Activated CD8-positive, alpha-beta T cell treated with anti-CD3 and anti-CD28 coated beads, Interleukin-2, amount 10 ng/mL, durations not matched to agents 7 days and 5 days (primary cell): ENCODE measurements at regions of chr16 and their contacts with region 1.

Region 1: GRCh38 chr16:4506450-4506849 is 30.3 kb downstream of the HMOX2 start:
- DNase-seq: peak; percentile 74
- ATAC-seq: peak; percentile 60
- H3K4me3 Mint-ChIP-seq: peak overlapping the region; percentile 73
- H3K27ac Mint-ChIP-seq: peak overlapping the region; percentile 95
- H3K4me1 Mint-ChIP-seq: peaks cover 63% of the 10 kb centered on the region
- H3K27me3 Mint-ChIP-seq: no peaks in the 10 kb centered on the region

Region 2: DNA sequence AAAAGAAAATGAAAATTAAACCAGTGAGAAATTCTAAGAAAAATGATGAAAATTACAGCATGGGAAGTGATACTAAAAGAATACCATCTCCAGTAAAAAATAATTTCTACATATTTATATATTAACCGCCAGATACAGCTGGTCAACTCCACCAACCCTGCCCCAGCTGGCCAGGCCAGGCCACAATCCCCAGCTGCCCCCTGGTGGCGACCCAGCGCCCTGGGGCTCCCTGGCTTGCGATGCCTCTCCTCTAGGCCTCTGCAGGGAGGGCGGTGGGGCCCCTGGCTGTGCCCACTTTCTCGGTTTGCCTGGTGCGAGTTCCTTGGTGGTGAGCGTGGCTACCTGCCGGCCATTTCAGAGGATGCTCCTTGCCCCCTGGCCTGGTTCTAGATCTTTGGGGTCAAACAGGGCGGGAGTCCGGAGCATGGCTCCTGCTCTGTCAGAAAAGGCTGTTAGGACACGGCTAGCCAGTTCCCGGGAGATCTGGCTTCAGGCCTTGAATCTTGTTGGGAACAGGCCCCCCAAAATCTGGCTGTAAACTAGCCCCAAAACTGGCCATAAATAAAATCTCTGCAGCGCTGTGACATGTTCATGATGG is 176.1 kb before region 1 on chr16:
- CTCF ChIA-PET with region 1: no interaction called
- POLR2A ChIA-PET with region 1: no interaction called
- DNase-seq: peak; percentile 79
- ATAC-seq: peak; percentile 74
- H3K4me3 Mint-ChIP-seq: no peak overlapping the region
- H3K27ac Mint-ChIP-seq: no peak overlapping the region
- H3K4me1 Mint-ChIP-seq: peaks cover 9% of the 10 kb centered on the region
- H3K27me3 Mint-ChIP-seq: no peaks in the 10 kb centered on the region

Region 3: GRCh38 chr16:4465977-4466779 is 40.3 kb before region 1 on chr16:
- CTCF ChIA-PET with region 1: interaction called, 10 read pairs
- POLR2A ChIA-PET with region 1: interaction called, 5 read pairs
- DNase-seq: peak; percentile 78
- ATAC-seq: peak; percentile 94
- H3K4me3 Mint-ChIP-seq: peak overlapping the region; percentile 1
- H3K27ac Mint-ChIP-seq: peak overlapping the region; percentile 76
- H3K4me1 Mint-ChIP-seq: peaks cover 23% of the 10 kb centered on the region
- H3K27me3 Mint-ChIP-seq: no peaks in the 10 kb centered on the region

Region 4: DNA sequence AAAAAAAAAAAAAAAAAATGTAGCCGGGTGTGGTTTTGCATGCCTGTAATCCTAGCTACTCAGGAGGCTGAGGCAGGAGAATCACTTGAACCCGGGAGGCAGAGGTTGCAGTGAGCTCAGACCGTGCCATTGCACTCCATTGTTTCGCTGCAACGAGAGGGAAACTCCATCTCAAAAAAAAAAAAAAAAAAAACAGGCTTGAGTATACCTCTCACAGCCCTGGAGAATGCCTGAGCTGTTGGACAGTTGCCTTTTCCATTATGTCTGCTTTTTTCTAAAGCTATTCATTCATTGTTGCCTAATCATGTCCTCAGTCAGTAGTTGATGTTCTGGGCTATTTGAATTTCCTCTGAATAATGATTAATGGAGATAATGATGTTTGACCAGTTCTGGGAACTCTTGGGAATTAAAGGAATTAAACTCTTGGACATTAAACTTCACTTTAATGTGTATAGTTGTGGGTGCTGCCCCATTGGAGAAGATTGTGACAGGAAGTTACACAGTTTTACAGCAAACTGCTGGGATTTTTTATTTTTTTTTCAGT is 18.4 kb before region 1 on chr16:
- CTCF ChIA-PET with region 1: interaction called, 173 read pairs
- POLR2A ChIA-PET with region 1: interaction called, 14 read pairs
- DNase-seq: peak; percentile 35
- ATAC-seq: peak; percentile 68
- H3K4me3 Mint-ChIP-seq: peak overlapping the region; percentile 64
- H3K27ac Mint-ChIP-seq: peak overlapping the region; percentile 92
- H3K4me1 Mint-ChIP-seq: peaks cover 62% of the 10 kb centered on the region
- H3K27me3 Mint-ChIP-seq: no peaks in the 10 kb centered on the region

Region 5: DNA sequence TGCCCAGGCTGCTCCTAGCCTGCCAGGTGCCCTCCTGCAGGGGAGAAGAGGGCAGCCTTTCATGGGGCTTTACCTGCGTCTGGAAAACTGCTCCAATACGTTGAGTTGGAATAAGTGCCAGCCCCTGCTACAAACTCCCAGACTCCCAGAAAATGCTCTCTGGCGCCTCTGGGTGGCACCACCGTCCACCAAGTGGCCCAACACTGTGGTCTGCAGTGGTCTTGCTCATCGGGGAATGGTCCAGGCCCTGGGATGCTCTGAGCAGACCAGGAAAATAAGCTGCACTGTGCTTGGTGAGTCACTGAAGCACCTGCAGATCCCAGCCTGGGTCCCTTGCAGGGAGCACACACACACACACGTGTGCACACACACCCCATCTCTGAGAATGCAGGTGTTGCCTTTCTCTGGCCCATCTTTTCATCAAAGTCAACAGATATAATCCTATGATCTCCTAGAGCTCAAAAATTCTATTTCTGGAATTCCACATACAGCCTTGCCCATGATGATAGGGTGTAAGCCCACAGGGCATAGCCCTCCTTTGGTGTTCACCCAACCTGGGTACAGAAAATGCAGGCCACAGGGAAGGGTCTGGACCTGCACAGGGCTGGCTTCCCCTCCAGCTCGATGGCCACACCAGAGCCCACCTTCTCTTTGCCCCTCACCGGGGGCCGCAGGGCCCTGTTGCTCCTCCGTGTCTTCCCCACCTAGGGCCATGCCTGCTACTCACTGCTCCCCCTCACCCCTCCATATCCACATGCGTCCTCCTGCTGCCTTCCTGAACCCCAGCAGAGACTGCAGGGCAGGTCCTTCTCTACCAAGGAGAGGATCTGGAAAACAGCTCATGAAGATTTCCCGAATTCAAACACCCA is 11.6 kb after region 1 on chr16:
- CTCF ChIA-PET with region 1: interaction called, 86 read pairs
- POLR2A ChIA-PET with region 1: interaction called, 13 read pairs
- DNase-seq: no peak
- ATAC-seq: no peak
- H3K4me3 Mint-ChIP-seq: no peak overlapping the region
- H3K27ac Mint-ChIP-seq: peak overlapping the region; percentile 59
- H3K4me1 Mint-ChIP-seq: peaks cover 54% of the 10 kb centered on the region
- H3K27me3 Mint-ChIP-seq: no peaks in the 10 kb centered on the region

Region 6: DNA sequence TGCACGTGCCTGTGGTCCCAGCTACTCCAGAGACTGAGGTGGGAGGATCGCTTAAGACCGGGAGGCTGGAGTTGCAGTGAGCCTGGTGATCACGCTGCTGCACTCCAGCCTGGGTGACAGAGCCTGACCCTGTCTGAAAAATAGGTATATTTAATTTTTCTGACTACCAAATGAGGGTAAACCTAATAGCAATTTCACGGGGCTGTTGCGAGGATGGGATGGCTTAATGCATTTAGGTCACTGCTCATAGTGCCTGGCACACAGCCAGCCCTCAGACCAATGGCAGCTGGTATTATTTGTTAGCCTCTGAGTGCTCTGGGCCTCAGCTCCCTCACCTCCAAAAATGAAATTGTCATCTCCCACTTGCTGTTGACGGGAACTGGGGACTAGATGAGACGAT is 38.0 kb after region 1 on chr16:
- CTCF ChIA-PET with region 1: interaction called, 159 read pairs
- POLR2A ChIA-PET with region 1: interaction called, 4 read pairs
- DNase-seq: no peak
- ATAC-seq: no peak
- H3K4me3 Mint-ChIP-seq: no peak overlapping the region
- H3K27ac Mint-ChIP-seq: no peak overlapping the region
- H3K4me1 Mint-ChIP-seq: peaks cover 17% of the 10 kb centered on the region
- H3K27me3 Mint-ChIP-seq: no peaks in the 10 kb centered on the region

Region 7: DNA sequence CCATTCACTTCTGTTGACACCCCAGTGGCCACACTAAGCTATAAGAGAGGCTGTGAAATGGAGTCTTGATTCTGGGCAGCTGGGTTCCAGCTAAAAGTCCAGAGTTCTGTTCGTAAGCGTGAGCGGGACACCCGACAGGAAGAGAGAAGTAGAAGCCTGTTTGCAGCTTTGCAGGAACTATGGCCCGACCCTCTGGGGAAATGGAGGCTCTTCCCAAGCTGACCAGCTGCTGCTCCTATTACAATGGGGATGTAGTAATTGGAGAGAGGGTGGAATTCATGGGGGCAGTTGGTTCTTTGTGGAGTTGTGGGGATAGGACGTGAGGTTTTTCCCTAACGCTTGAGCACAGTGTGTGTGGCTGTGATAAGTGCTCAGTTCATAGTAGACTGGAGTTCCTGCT is 79.8 kb after region 1 on chr16:
- CTCF ChIA-PET with region 1: interaction called, 40 read pairs
- POLR2A ChIA-PET with region 1: interaction called, 3 read pairs
- DNase-seq: no peak
- ATAC-seq: no peak
- H3K4me3 Mint-ChIP-seq: no peak overlapping the region
- H3K27ac Mint-ChIP-seq: no peak overlapping the region
- H3K4me1 Mint-ChIP-seq: peaks cover 4% of the 10 kb centered on the region
- H3K27me3 Mint-ChIP-seq: peaks cover 11% of the 10 kb centered on the region

Region 8: GRCh38 chr16:4597174-4597573 is 90.7 kb after region 1 on chr16:
- CTCF ChIA-PET with region 1: no interaction called
- POLR2A ChIA-PET with region 1: no interaction called
- DNase-seq: no peak
- ATAC-seq: no peak
- H3K4me3 Mint-ChIP-seq: no peak overlapping the region
- H3K27ac Mint-ChIP-seq: no peak overlapping the region
- H3K4me1 Mint-ChIP-seq: no peaks in the 10 kb centered on the region
- H3K27me3 Mint-ChIP-seq: peaks cover 3% of the 10 kb centered on the region

Region 9: DNA sequence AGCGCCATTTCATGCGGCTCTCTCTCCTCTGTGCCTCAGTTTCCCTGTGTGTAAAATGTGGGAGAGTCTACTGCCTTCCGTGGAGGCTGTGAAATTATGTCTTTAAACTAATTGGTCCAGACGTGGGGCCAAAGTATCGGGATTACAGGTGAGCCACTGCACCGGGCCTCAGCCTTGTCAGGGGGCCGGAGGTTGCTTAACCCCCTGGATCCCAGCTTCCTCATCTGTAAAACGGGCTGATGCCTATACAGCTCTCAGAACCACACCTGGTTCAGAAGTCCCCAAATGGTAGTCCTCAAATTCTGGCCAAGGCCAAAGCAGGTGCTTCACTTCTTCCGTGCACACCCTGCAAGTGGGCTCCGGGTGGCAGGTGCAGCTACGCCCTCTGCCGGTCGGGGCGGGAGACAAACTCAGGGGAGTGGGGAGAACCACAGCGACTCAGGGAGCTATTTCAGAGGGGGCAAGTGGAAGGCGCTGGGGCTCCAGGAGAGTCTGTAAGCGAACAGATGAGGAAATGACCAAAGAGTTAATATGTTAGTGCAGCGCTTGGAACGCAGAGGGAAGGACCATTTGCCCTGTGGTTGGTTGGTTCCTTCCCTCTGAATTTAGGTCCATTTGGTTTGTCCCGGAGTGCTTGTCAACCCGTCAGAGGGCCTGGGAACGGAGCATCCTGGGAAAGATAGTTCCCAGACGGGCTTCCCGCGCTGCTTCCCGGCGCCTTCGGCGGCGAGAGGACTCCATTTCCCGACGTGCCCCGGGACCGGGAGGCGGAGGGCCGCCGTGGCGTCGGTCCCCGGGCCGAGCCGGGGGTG is 117.8 kb after region 1 on chr16 and contains the start of gene MGRN1:
- CTCF ChIA-PET with region 1: interaction called, 32 read pairs
- POLR2A ChIA-PET with region 1: interaction called, 3 read pairs
- DNase-seq: peak; percentile 95
- ATAC-seq: peak; percentile 89
- H3K4me3 Mint-ChIP-seq: peak within 1 kb of the TSS; percentile 99
- H3K27ac Mint-ChIP-seq: peak within 1 kb of the TSS; percentile 99
- H3K4me1 Mint-ChIP-seq: peaks cover 36% of the 10 kb centered on the region
- H3K27me3 Mint-ChIP-seq: no peaks in the 10 kb centered on the region
- total RNA-seq, gene MGRN1: 77.3 to 80.6 TPM